ENCODE measurements at regions of chr4 and their contacts with region 1.

Region 1: GRCh38 chr4:87006676-87007527 is 72.1 kb downstream of the AFF1 start:
- DNase-seq: peak; percentile 94
- H3K4me3 ChIP-seq: peak overlapping the region; percentile 79
- H3K27ac ChIP-seq: peak overlapping the region; percentile 86
- H3K4me1 ChIP-seq: peaks cover 66% of the 10 kb centered on the region
- CTCF ChIP-seq: no peak; the same call in 1 of the 2 replicates

Region 2: DNA sequence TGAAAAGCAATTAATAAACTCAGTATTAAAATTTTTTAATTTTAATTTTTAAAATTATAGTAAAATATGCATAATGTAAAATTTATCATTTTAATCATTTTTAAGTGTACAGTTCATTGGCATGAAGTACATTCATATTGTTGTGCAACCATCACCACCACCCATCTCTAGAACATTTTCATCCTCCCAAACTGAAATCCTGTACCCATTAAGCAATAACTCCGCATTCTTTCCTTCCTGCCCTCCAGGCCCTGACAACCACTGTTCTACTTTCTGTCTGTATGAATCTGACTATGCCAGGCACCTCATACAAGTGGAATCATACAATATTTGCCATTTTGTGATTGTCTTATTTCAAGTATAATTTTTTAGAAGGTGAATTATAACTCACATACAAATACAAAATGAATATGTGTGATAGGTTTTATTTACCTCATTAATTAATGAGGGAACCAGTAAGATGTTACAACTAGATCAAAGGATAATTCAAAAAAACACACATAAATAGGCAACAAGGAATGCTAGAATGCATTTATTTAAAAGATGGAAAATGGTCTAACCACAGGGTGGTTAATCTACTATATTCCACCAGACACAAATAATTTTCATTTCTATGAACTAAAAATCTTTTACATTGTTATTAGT is 85.2 kb before region 1 on chr4:
- CTCF ChIA-PET with region 1: interaction called, 7 read pairs
- POLR2A ChIA-PET with region 1: interaction called, 11 read pairs
- intact Hi-C with region 1: loop called (anchors 1 kb)
- DNase-seq: no peak
- H3K4me3 ChIP-seq: no peak overlapping the region
- H3K27ac ChIP-seq: no peak overlapping the region
- H3K4me1 ChIP-seq: peaks cover 12% of the 10 kb centered on the region
- CTCF ChIP-seq: no peak

Region 3: DNA sequence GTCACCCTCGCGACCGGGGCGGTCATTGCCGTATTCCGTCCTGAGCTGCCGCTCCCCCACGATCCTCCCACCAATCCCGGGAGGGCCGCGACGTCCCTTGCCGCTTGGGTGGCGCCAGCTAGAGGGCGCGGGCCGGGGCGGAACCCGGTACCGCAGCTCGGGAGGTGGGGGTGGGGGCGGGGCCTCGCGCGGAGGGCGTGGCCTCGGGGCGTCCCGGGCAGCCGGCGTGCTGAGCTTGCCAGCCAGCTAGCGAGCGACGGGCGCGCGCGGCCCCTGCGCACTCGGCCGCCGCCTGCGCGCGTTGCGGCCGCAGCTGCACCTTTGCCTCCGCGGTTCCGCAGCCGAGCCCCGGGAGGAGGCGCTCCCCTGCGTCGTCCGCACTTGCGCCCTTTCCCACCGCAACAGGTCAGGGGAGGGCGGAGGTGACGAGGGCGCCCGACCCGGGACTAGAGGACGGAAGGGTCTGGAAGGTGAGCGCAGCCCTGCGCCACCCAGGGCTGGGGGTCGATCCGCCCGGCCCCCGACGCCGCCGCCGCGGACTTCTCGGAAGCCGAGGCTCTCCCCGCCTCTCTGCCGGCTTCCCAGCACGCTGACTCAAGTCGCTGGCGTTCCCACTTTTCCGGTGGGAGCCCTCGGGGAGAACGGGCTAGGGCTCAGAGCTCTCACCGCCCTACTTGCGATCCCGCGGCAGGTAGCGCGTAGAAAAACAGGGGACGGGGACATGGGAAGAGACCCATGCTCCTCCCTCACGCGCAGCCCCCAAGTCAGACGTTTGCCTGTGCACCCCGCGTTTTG is 71.9 kb before region 1 on chr4 and contains the start of gene AFF1:
- CTCF ChIA-PET with region 1: interaction called, 5 read pairs
- POLR2A ChIA-PET with region 1: interaction called, 41 read pairs
- intact Hi-C with region 1: loop called (anchors 1 kb)
- DNase-seq: peak; percentile 91
- H3K4me3 ChIP-seq: peak within 1 kb of the TSS; percentile 92
- H3K27ac ChIP-seq: peak within 1 kb of the TSS; percentile 85
- H3K4me1 ChIP-seq: peaks cover 47% of the 10 kb centered on the region
- CTCF ChIP-seq: peak; percentile 58
- total RNA-seq, gene AFF1: 28.7 and 29.9 TPM in 2 replicates

Region 4: GRCh38 chr4:86993909-86994681 is 12.8 kb before region 1 on chr4:
- CTCF ChIA-PET with region 1: interaction called, 3 read pairs
- POLR2A ChIA-PET with region 1: interaction called, 17 read pairs
- intact Hi-C with region 1: no loop called
- DNase-seq: peak; percentile 40
- H3K4me3 ChIP-seq: no peak overlapping the region
- H3K27ac ChIP-seq: peak overlapping the region; percentile 70
- H3K4me1 ChIP-seq: peaks cover 65% of the 10 kb centered on the region
- CTCF ChIP-seq: no peak

Region 5: GRCh38 chr4:87093443-87094123 is 86.7 kb after region 1 on chr4:
- CTCF ChIA-PET with region 1: no interaction called
- POLR2A ChIA-PET with region 1: interaction called, 4 read pairs
- intact Hi-C with region 1: loop called (anchors 1 kb)
- DNase-seq: peak; percentile 80
- H3K4me3 ChIP-seq: no peak overlapping the region
- H3K27ac ChIP-seq: no peak overlapping the region
- H3K4me1 ChIP-seq: peaks cover 22% of the 10 kb centered on the region
- CTCF ChIP-seq: peak; percentile 88

Region 6: GRCh38 chr4:88284439-88285234 is 1277.7 kb after region 1 on chr4 and contains the start of gene PPM1K:
- CTCF ChIA-PET with region 1: no interaction called
- POLR2A ChIA-PET with region 1: no interaction called
- intact Hi-C with region 1: loop called (anchors 10 kb)
- DNase-seq: peak; percentile 99
- H3K4me3 ChIP-seq: peak within 1 kb of the TSS; percentile 79
- H3K27ac ChIP-seq: peak within 1 kb of the TSS; percentile 91
- H3K4me1 ChIP-seq: peaks cover 36% of the 10 kb centered on the region
- CTCF ChIP-seq: no peak; the same call in 1 of the 2 replicates
- total RNA-seq, gene PPM1K: 65.7 and 83.9 TPM in 2 replicates

Measured in OCI-LY7 (cell line).